WTC11 (cell line): ENCODE measurements at regions of chr1 and their contacts with region 1.

Region 1: DNA sequence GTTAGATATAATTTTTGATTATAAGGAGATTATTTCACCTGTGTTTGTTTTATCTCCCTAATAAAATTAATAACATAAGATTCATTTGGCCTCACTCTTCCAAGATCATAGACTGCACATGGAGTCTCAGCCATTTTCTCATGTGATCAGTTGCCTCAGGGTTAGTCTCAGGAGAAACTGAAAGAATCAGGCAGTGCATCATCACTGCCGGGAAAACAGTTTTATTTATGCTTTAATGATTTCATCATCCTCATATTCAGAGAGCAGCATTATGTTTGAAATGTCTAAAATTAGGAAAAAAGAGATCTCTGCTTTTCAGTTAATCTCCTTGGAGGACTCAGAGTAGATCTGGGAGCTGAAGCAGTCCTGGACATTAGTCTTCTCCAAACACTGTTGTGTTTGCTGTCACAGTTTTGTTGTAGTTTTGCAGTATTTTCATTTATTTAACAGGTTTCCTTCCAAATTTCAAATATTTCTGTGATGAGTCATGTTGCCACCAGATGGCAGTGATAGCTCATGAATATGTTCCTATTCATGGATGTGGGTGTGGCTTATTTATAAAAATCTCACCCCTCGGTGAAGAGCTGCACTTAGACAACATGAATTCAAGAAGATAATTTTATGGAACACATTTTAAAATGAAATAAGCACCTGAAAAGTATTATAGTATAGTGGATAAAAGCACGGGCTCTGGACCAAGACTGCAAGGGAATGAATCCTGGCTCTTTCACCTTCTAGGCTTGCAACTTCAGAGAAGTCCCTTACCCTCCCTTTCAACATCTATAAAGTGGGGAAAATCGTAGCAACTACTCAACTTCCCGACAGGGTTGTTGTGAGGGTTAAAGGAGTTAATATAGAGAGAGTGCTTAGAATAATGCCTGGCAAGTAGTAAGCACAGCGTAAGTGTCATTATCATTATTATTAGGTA is 31.2 kb downstream of the CHD1L start:
- DNase-seq: no peak
- ATAC-seq: no peak
- H3K4me3 Mint-ChIP-seq: no peak overlapping the region
- H3K27ac Mint-ChIP-seq: peak overlapping the region; percentile 65; the same call in 1 of the 2 replicates
- H3K4me1 Mint-ChIP-seq: peaks cover 7% of the 10 kb centered on the region; the same call in 1 of the 2 replicates
- H3K27me3 Mint-ChIP-seq: no peaks in the 10 kb centered on the region
- CTCF ChIP-seq: 0 out of 2 replicates have a peak, but pooled peaks have one; percentile 19

Region 2: DNA sequence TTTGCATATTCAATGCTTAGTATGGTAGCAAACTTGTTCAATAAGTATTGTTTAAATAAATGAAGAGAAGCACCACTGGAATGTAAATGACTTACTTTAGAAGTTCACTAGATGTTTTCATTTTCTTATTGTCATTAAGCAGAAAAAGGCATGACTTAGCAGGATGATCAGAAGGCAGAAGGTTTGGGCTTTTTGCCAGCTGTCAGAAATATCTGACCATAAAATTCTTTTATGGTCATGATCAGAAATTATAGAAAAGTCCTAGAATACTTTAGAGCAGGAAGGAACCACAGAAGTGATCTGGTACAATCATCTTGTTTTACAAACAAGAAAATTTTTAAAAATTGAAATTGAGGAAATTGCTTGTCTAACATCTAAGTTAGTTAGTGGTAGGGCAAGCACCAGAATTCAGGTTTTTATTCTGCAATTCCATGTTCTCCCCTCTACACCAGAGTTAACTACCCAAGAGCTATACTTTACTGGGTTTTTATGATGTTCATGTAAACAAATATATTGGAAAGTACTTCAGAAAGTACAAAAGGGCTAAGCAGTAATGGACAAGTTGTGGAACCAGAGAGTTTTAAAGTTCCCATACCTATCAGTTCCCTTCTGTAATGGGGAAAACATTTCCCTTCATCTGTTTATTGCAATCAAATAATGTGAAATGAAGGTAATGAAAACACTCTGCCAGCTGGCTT is 58.7 kb before region 1 on chr1:
- CTCF ChIA-PET with region 1: no interaction called
- POLR2A ChIA-PET with region 1: no interaction called
- DNase-seq: no peak
- ATAC-seq: no peak
- H3K4me3 Mint-ChIP-seq: no peak overlapping the region
- H3K27ac Mint-ChIP-seq: no peak overlapping the region
- H3K4me1 Mint-ChIP-seq: peaks cover 3% of the 10 kb centered on the region
- H3K27me3 Mint-ChIP-seq: no peaks in the 10 kb centered on the region
- CTCF ChIP-seq: no peak

Region 3: DNA sequence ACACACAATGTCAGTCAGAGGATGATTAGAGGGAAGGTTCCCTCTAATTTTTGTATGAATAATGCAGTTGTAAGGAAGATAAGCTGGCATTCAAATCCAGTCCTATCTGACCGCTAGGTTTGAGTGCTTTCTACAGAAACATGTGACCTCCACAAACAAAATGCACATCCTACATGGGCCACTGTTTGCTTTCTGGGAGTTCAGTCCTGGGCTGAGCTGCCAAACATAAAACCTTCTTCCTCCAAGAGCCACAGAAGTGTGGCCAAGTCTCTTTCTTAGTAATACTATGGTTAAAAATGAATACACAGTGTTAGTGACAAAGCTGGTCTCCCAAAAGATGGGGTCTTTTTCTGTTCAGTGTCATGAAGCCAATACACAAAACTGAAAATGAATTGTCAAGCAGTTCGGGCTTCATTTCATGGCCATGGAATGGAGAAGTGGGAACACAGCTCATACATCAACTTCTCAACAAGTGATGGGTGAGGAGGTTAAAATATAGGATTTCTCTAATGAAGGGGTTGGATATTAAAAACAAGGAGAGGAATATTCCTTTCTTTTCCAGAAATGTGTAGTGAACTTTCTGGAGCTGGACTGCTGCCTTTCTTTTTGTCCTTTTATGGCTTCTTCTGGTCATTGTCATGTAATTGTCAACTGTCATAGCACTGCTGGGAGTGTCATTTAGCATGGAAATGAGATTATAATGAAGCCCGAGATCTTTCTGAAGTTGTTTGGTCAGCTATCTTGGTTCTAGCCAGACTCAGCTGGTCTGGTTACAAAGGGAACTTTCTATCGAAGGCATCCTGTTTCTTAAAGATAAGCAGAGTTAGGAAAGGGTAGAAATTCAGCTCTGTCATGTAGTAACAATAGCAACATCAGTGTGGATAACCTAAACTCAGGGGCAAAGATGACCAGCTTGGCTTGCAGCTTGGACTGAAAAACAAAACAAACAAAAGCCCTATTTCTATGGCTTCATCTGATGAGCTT is 103.9 kb after region 1 on chr1:
- CTCF ChIA-PET with region 1: interaction called, 15 read pairs
- POLR2A ChIA-PET with region 1: no interaction called
- DNase-seq: no peak
- ATAC-seq: no peak
- H3K4me3 Mint-ChIP-seq: no peak overlapping the region
- H3K27ac Mint-ChIP-seq: no peak overlapping the region
- H3K4me1 Mint-ChIP-seq: peaks cover 6% of the 10 kb centered on the region
- H3K27me3 Mint-ChIP-seq: no peaks in the 10 kb centered on the region
- CTCF ChIP-seq: no peak

Region 4: GRCh38 chr1:147389532-147390524 is 116.2 kb after region 1 on chr1:
- CTCF ChIA-PET with region 1: interaction called, 68 read pairs
- POLR2A ChIA-PET with region 1: no interaction called
- DNase-seq: no peak
- ATAC-seq: peak; percentile 95
- H3K4me3 Mint-ChIP-seq: no peak overlapping the region
- H3K27ac Mint-ChIP-seq: peak overlapping the region; percentile 61
- H3K4me1 Mint-ChIP-seq: peaks cover 7% of the 10 kb centered on the region
- H3K27me3 Mint-ChIP-seq: no peaks in the 10 kb centered on the region; the same call in 1 of the 2 replicates
- CTCF ChIP-seq: peak; percentile 60

Region 5: GRCh38 chr1:147494998-147495580 is 221.4 kb after region 1 on chr1:
- CTCF ChIA-PET with region 1: interaction called, 15 read pairs
- POLR2A ChIA-PET with region 1: no interaction called
- DNase-seq: peak; percentile 79
- ATAC-seq: peak; percentile 93
- H3K4me3 Mint-ChIP-seq: no peak overlapping the region
- H3K27ac Mint-ChIP-seq: no peak overlapping the region
- H3K4me1 Mint-ChIP-seq: peaks cover 3% of the 10 kb centered on the region; the same call in 1 of the 2 replicates
- H3K27me3 Mint-ChIP-seq: peaks cover 2% of the 10 kb centered on the region
- CTCF ChIP-seq: peak; percentile 78